Calu3 (cell line): ENCODE measurements at regions of chr19 and their contacts with region 1.

Region 1: DNA sequence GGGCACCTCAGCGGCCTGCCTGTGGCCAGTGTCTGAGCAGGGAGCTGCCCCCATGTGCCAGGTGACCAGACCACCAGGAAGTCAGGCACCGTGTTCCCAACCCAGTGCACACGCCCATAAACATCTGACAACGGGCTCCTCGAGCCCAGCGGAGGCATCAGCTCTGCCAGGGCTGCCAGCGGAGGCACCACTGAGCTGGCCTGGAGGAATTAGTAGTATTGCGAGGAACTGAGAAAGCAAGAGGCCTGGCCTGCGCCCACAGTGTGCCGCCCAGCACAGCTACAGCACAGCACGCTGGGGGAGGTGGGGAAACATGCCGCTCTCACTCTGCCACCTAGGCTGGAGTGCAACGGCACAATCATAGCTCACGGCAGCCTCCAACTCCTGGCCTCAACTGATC is 44.6 kb downstream of the ANKRD27 start:
- DNase-seq: no peak
- H3K4me3 Mint-ChIP-seq: no peak overlapping the region
- H3K27ac Mint-ChIP-seq: no peak overlapping the region
- H3K4me1 Mint-ChIP-seq: no peaks in the 10 kb centered on the region
- H3K27me3 Mint-ChIP-seq: no peaks in the 10 kb centered on the region
- CTCF ChIP-seq: no peak

Region 2: GRCh38 chr19:32599736-32600157 is 30.6 kb before region 1 on chr19:
- CTCF ChIA-PET with region 1: no interaction called
- intact Hi-C with region 1: loop called (anchors 1 kb)
- DNase-seq: peak; percentile 57
- H3K4me3 Mint-ChIP-seq: no peak overlapping the region
- H3K27ac Mint-ChIP-seq: no peak overlapping the region
- H3K4me1 Mint-ChIP-seq: no peaks in the 10 kb centered on the region
- H3K27me3 Mint-ChIP-seq: no peaks in the 10 kb centered on the region
- CTCF ChIP-seq: peak; percentile 61

Region 3: GRCh38 chr19:32606289-32606688 is 24.0 kb before region 1 on chr19:
- CTCF ChIA-PET with region 1: interaction called, 10 read pairs
- intact Hi-C with region 1: loop called (anchors 1 kb)
- DNase-seq: no peak
- H3K4me3 Mint-ChIP-seq: no peak overlapping the region
- H3K27ac Mint-ChIP-seq: no peak overlapping the region
- H3K4me1 Mint-ChIP-seq: no peaks in the 10 kb centered on the region
- H3K27me3 Mint-ChIP-seq: no peaks in the 10 kb centered on the region
- CTCF ChIP-seq: no peak